ENCODE measurements at regions of chr12 and their contacts with region 1.

Region 1: DNA sequence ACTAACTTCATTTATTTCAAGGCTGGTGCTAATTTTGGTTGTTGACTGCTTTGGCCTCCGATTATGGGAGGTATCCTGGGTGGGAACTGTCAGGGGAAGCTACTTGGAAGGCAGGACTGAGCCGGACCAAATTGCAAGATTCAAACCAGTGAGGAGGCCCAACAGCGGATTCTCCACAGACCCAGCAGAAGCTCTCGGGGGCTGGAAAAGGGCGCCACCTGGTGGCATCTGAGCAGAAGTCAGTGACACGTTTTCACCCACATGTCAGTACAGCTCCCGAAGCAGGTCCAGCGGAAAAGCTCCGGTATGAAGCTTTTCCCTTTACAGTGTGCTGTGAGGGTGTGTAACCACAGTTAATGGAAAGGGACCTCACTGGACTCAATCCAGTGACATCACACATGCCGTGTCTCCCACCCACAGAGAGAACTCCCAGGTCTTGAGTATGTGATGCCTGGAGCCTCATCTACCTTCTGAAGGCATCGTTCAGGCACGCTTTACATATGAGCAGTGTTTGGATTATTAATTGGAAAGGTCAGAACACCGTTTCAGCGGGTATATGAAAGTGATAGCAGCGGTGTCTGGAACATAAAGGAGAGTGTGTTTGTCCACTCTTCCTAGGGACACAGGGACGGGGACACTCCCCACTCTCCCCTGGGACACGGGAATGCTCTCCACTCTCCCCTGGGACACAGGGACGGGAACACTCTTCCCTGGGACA is 3.6 kb upstream of the P2RX2 start:
- DNase-seq: peak; percentile 76
- ATAC-seq: peak; percentile 96
- H3K4me3 ChIP-seq: no peak overlapping the region
- H3K27ac ChIP-seq: no peak overlapping the region
- H3K4me1 ChIP-seq: peaks cover 0 to 8% of the 10 kb centered on the region in 2 experiments; a peak in 2 of 4 replicates
- H3K27me3 ChIP-seq: no peaks in the 10 kb centered on the region
- CTCF ChIP-seq: peak; percentile 84 to 94 (median 94)
- POLR2A ChIP-seq: no peak
- RAD21 ChIP-seq: peak; percentile 98

Region 2: DNA sequence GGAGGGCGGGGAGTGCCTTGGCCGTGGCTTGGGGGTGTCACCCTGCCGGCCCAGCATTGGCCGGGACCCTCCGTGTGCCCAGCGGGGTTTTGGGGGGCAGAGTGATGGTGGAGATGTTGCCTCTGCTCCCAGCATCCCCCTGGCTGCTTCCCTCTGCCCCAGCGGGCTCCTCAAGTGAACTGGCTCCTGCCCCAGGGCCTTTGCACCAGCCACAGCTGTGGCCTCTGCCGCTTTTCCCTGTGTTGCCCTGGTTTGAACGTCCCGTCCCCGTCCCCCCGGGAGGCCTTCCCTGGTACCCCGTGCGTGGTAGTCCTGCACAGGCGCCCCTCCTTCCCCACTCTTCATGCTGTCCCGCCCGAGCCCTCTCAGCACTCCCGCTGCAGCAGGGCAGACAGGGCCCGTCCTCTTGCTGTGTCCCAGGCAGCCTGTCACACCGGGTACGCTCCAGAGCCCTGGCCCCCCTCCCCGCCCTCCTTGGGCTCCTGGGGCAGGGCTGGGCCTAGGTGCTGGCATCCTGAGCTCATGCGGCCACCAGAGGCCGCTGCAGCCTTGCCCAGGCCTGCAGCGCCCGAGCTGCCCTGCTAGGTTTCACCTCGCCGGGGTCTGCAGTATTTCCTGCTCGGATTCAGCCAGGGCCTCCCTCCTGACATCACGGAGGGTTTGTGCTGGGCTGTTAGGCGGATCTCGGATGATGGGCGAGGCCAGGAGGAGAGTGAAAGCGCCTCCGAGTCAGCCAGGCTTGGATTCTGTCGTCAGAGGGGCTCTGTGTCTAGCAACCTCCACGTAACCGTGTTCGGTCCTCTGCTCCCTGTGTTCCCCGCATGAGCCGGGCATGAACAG is 461.3 kb before region 1 on chr12:
- CTCF ChIA-PET with region 1: interaction called, 5 read pairs
- POLR2A ChIA-PET with region 1: no interaction called
- RAD21 ChIA-PET with region 1: interaction called in 1 of 2 experiments, 5 read pairs
- intact Hi-C with region 1: loop called (anchors 5 kb)
- DNase-seq: no peak
- ATAC-seq: peak; percentile 97
- H3K4me3 ChIP-seq: no peak overlapping the region
- H3K27ac ChIP-seq: no peak overlapping the region
- H3K4me1 ChIP-seq: no peaks in the 10 kb centered on the region
- H3K27me3 ChIP-seq: no peaks in the 10 kb centered on the region
- CTCF ChIP-seq: peak; percentile 86 to 94 (median 93)
- POLR2A ChIP-seq: no peak
- RAD21 ChIP-seq: peak; percentile 97

Region 3: GRCh38 chr12:132429946-132430643 is 184.9 kb before region 1 on chr12:
- CTCF ChIA-PET with region 1: interaction called, 22 read pairs
- POLR2A ChIA-PET with region 1: no interaction called
- RAD21 ChIA-PET with region 1: interaction called, 4 to 6 read pairs
- intact Hi-C with region 1: loop called (anchors 1 kb)
- DNase-seq: peak; percentile 41
- ATAC-seq: peak; percentile 85
- H3K4me3 ChIP-seq: peak overlapping the region; percentile 28 to 52
- H3K27ac ChIP-seq: no peak overlapping the region; the same call in 1 of the 2 replicates
- H3K4me1 ChIP-seq: peaks cover 14 to 26% of the 10 kb centered on the region in 2 experiments
- H3K27me3 ChIP-seq: no peaks in the 10 kb centered on the region
- CTCF ChIP-seq: no peak
- POLR2A ChIP-seq: no peak
- RAD21 ChIP-seq: no peak

Region 4: GRCh38 chr12:132506328-132507160 is 108.5 kb before region 1 on chr12:
- CTCF ChIA-PET with region 1: no interaction called
- POLR2A ChIA-PET with region 1: no interaction called
- RAD21 ChIA-PET with region 1: no interaction called
- intact Hi-C with region 1: no loop called
- DNase-seq: no peak
- ATAC-seq: no peak
- H3K4me3 ChIP-seq: no peak overlapping the region
- H3K27ac ChIP-seq: no peak overlapping the region
- H3K4me1 ChIP-seq: peaks cover 16 to 27% of the 10 kb centered on the region in 2 experiments
- H3K27me3 ChIP-seq: no peaks in the 10 kb centered on the region
- CTCF ChIP-seq: no peak
- POLR2A ChIP-seq: no peak
- RAD21 ChIP-seq: no peak

Region 5: DNA sequence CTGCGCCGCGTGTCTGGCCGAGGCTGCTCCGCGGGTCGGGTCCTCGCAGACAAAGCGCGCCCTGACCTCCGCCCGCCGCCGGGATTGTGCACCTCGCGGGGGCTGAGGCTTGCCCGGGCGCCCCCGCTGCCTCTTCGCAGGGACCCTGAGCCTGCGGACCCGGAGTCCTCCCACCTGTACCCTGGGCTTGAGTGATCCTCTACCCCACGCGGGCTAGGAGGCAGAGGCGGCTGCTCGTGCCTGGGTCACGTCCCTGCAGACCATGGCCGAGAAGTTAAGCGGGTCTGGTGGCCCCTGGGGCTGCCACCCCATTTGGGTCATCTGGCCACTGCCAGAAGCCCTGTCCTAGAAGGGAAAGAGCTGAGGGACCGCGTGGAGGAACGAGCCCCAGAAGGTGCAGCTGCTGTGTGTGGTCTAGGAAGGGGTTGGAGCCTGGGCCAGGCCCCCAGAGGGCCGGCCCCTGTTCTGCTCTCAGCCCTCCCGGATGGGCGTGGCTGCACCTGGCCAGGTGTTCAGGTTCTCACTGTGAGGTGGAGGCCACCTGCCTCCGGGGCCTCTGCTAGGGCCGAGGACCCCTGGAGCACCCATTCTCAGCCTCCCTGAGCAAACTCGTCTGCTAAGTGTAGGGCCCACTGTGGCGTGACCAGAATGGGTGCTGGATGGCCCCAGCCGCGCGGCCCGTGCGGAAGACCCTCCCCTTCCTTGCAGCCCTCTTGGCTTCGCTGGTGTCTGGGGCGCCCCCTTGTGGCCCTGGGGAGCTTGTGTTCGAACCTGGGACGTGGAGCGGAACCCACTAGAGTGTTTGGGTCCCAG is 54.2 kb before region 1 on chr12:
- CTCF ChIA-PET with region 1: interaction called, 8 read pairs
- POLR2A ChIA-PET with region 1: no interaction called
- RAD21 ChIA-PET with region 1: interaction called in 1 of 2 experiments, 5 read pairs
- intact Hi-C with region 1: loop called (anchors 2 kb)
- DNase-seq: peak; percentile 75
- ATAC-seq: peak; percentile 80
- H3K4me3 ChIP-seq: peak overlapping the region; percentile 87 to 96
- H3K27ac ChIP-seq: peak overlapping the region; percentile 96
- H3K4me1 ChIP-seq: peaks cover 5 to 18% of the 10 kb centered on the region in 2 experiments; a peak in 2 of 4 replicates
- H3K27me3 ChIP-seq: no peaks in the 10 kb centered on the region
- CTCF ChIP-seq: peak; percentile 86 to 96 (median 95)
- POLR2A ChIP-seq: no peak
- RAD21 ChIP-seq: peak; percentile 65

Region 6: GRCh38 chr12:132600048-132601032 is 14.7 kb before region 1 on chr12:
- CTCF ChIA-PET with region 1: interaction called, 7 read pairs
- POLR2A ChIA-PET with region 1: no interaction called
- RAD21 ChIA-PET with region 1: no interaction called
- intact Hi-C with region 1: loop called (anchors 1 kb)
- DNase-seq: peak; percentile 23
- ATAC-seq: peak; percentile 88
- H3K4me3 ChIP-seq: peak overlapping the region in 1 of 2 experiments; percentile 14; a peak in 1 of 4 replicates
- H3K27ac ChIP-seq: no peak overlapping the region
- H3K4me1 ChIP-seq: peaks cover 5 to 25% of the 10 kb centered on the region in 2 experiments
- H3K27me3 ChIP-seq: no peaks in the 10 kb centered on the region
- CTCF ChIP-seq: peak; percentile 65 to 84 (median 68)
- POLR2A ChIP-seq: no peak
- RAD21 ChIP-seq: no peak; the same call in 1 of the 2 replicates

Measured in HCT116 (cell line).